Calu3 (cell line): ENCODE measurements at regions of chr6 and their contacts with region 1.

Region 1: GRCh38 chr6:63764318-63764916 is 128.8 kb downstream of the PHF3 start:
- DNase-seq: no peak
- H3K4me3 Mint-ChIP-seq: no peak overlapping the region
- H3K27ac Mint-ChIP-seq: no peak overlapping the region
- H3K4me1 Mint-ChIP-seq: no peaks in the 10 kb centered on the region
- H3K27me3 Mint-ChIP-seq: no peaks in the 10 kb centered on the region
- CTCF ChIP-seq: peak; percentile 46

Region 2: DNA sequence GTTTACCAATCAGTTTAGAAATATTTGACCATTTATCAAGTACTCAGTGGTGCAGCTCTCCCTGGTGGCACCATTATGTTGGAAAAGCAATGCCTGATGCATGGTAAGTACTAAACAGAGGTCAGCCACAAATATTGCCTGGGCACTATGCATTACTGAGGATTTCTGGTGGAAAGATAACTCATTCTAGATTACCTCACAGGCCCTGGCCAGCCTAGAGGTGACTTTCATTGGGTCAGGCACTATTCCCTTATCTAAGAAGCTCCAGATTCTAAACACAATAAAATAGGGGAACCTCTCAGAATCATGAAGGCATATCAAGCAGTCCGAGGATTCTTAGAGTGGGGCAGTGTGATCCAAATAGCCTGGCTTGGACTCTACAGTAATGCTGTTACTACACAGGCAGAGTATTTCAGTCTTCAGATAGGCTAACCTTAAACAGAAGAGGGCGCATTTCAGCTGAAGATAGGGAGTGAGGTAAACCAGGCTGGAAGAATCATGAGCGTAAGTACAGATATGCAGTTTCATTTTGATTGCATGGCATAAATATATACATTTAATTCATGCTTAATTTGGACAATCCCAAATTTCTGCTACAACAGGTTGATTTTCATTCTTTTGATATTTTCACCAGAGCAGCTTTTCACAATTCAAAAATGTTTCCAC is 456.7 kb before region 1 on chr6:
- CTCF ChIA-PET with region 1: no interaction called
- intact Hi-C with region 1: loop called (anchors 2 kb)
- DNase-seq: peak; percentile 54
- H3K4me3 Mint-ChIP-seq: no peak overlapping the region
- H3K27ac Mint-ChIP-seq: no peak overlapping the region
- H3K4me1 Mint-ChIP-seq: no peaks in the 10 kb centered on the region
- H3K27me3 Mint-ChIP-seq: no peaks in the 10 kb centered on the region
- CTCF ChIP-seq: peak; percentile 44

Region 3: DNA sequence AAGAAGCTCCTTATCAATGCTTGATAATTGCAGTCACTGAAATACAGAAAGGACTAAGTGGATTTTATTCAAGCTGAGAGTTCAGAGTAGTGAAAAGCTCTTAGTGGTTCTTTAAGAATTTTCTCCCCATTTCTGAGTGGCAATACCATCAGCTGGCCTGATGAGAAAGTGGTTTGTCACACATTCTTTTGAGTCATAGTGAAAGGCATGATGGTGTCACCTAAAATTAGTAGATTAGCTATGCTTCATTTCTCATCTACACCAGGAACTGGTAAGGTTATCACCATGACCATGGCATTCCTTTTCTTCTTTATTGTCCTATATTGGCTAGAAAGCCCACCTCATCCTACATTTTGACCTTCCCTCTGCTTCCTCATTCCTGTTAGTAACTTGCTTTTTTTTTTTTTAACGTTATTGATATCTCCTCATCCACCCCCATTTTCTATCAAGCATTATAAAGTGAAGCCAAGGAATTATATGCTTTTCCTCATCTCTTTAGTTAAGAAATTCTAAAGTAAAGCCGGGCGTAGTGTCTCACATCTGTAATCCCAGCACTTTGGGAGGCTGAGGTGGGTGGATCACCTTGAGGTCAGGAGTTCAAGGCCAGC is 259.5 kb before region 1 on chr6:
- CTCF ChIA-PET with region 1: no interaction called
- intact Hi-C with region 1: loop called (anchors 5 kb)
- DNase-seq: no peak
- H3K4me3 Mint-ChIP-seq: no peak overlapping the region
- H3K27ac Mint-ChIP-seq: peak overlapping the region; percentile 45
- H3K4me1 Mint-ChIP-seq: peaks cover 10% of the 10 kb centered on the region
- H3K27me3 Mint-ChIP-seq: no peaks in the 10 kb centered on the region
- CTCF ChIP-seq: no peak

Region 4: DNA sequence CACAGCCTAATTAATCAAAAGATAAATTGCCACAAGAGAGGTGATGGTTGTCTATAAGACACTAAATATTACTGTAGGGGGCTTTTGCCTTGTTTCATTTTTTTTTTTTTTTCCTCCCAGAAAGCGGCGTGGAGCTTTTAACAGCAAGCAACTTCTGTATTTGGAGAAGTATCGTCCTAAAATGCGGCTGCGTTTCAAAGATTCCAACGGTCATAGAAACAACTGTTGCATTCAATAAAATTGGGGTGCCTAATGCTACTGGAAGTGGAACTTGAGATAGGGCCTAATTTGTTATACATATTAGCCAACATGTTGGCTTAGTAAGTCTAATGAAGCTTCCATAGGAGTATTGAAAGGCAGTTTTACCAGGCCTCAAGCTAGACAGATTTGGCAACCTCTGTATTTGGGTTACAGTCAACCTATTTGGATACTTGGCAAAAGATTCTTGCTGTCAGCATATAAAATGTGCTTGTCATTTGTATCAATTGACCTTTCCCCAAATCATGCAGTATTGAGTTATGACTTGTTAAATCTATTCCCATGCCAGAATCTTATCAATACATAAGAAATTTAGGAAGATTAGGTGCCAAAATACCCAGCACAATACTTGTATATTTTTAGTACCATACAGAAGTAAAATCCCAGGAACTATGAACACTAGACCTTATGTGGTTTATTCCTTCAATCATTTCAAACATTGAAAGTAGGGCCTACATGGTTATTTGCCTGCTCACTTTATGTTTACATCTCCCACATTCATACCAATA is 184.3 kb before region 1 on chr6:
- CTCF ChIA-PET with region 1: interaction called, 3 read pairs
- intact Hi-C with region 1: loop called (anchors 5 kb)
- DNase-seq: no peak
- H3K4me3 Mint-ChIP-seq: no peak overlapping the region
- H3K27ac Mint-ChIP-seq: peak overlapping the region; percentile 65
- H3K4me1 Mint-ChIP-seq: no peaks in the 10 kb centered on the region
- H3K27me3 Mint-ChIP-seq: no peaks in the 10 kb centered on the region
- CTCF ChIP-seq: no peak

Region 5: GRCh38 chr6:63634630-63635029 is 129.8 kb before region 1 on chr6:
- CTCF ChIA-PET with region 1: no interaction called
- intact Hi-C with region 1: no loop called
- DNase-seq: no peak
- H3K4me3 Mint-ChIP-seq: peak overlapping the region; percentile 98
- H3K27ac Mint-ChIP-seq: no peak overlapping the region
- H3K4me1 Mint-ChIP-seq: peaks cover 23% of the 10 kb centered on the region
- H3K27me3 Mint-ChIP-seq: no peaks in the 10 kb centered on the region
- CTCF ChIP-seq: no peak